Activated naive CD4-positive, alpha-beta T cell treated with anti-CD3 and anti-CD28 coated beads, Interleukin-2, amount 10 ng/mL, durations not matched to agents 7 days and 5 days (primary cell): ENCODE measurements at regions of chr4 and their contacts with region 1.

Region 1: GRCh38 chr4:54945838-54946237 is 179.6 kb downstream of the KDR start:
- DNase-seq: no peak
- H3K4me3 Mint-ChIP-seq: no peak overlapping the region
- H3K27ac Mint-ChIP-seq: peak overlapping the region; percentile 5
- H3K4me1 Mint-ChIP-seq: peaks cover 52% of the 10 kb centered on the region
- H3K27me3 Mint-ChIP-seq: no peaks in the 10 kb centered on the region

Region 2: GRCh38 chr4:54683616-54684346 is 262.1 kb before region 1 on chr4:
- CTCF ChIA-PET with region 1: interaction called, 28 read pairs
- DNase-seq: peak; percentile 72
- H3K4me3 Mint-ChIP-seq: no peak overlapping the region
- H3K27ac Mint-ChIP-seq: peak overlapping the region; percentile 3
- H3K4me1 Mint-ChIP-seq: peaks cover 27% of the 10 kb centered on the region
- H3K27me3 Mint-ChIP-seq: no peaks in the 10 kb centered on the region

Region 3: GRCh38 chr4:54924639-54925284 is 21.1 kb before region 1 on chr4:
- CTCF ChIA-PET with region 1: no interaction called
- DNase-seq: no peak
- H3K4me3 Mint-ChIP-seq: no peak overlapping the region
- H3K27ac Mint-ChIP-seq: no peak overlapping the region
- H3K4me1 Mint-ChIP-seq: peaks cover 3% of the 10 kb centered on the region
- H3K27me3 Mint-ChIP-seq: peaks cover 3% of the 10 kb centered on the region

Region 4: DNA sequence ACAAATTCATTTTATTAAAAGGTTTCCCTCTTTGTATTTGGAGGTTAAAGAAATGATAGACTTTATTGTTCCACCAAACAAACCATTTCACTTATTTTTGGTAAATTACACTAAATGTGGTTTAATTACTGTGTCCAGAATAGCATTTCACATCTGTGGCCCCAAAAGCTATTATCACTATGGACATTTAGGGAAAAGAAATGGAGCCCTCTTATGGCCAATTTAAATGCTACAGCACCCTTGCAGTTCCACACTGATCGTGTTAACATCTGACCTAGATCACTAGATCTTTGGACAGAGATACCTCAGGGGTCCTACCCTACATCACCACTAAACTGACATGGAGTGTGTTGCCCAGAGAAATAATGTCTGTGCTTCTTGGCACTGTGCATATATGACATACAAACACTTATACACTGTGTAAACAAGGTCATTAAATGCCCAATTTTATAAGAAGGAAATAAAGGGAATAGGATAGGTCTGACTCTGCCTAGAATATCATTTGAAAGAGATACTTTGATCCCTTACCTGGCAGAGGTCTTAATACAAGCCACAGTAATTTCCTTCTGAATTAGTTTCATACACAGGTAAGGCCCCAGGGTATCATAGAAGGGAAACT is 15.6 kb after region 1 on chr4:
- CTCF ChIA-PET with region 1: interaction called, 12 read pairs
- DNase-seq: no peak
- H3K4me3 Mint-ChIP-seq: no peak overlapping the region
- H3K27ac Mint-ChIP-seq: no peak overlapping the region
- H3K4me1 Mint-ChIP-seq: peaks cover 21% of the 10 kb centered on the region
- H3K27me3 Mint-ChIP-seq: no peaks in the 10 kb centered on the region